PC-3 (cell line): ENCODE measurements at regions of chr7 and their contacts with region 1.

Region 1: DNA sequence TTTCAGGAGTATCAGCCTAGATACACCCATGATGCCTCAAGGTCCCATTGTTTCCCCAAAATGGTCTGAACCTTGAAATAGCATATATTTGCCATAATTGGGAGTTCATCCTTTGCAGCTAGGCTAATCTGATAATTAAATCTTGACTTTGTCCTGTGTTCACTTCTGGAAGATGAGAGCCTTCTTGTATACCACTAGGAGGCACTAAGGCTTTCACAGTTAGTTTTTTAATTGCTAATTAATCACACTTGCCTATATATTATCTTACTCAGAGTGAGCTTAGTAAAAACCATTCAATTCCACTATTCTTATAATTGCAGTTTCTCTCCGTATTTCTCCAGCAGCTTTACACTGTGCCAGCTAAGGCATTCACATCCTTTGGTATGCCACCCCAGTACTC is 48.7 kb upstream of the MAGI2 start:
- DNase-seq: peak; percentile 7
- ATAC-seq: no peak
- H3K4me3 ChIP-seq: no peak overlapping the region
- H3K27ac ChIP-seq: no peak overlapping the region
- H3K4me1 ChIP-seq: no peaks in the 10 kb centered on the region
- H3K27me3 ChIP-seq: no peaks in the 10 kb centered on the region
- CTCF ChIP-seq: peak; percentile 62

Region 2: GRCh38 chr7:79165225-79165624 is 336.9 kb before region 1 on chr7:
- CTCF ChIA-PET with region 1: no interaction called
- POLR2A ChIA-PET with region 1: no interaction called
- intact Hi-C with region 1: no loop called
- DNase-seq: no peak
- ATAC-seq: no peak
- H3K4me3 ChIP-seq: no peak overlapping the region
- H3K27ac ChIP-seq: no peak overlapping the region
- H3K4me1 ChIP-seq: no peaks in the 10 kb centered on the region
- H3K27me3 ChIP-seq: no peaks in the 10 kb centered on the region
- CTCF ChIP-seq: no peak

Region 3: GRCh38 chr7:79553811-79554555 is 51.8 kb after region 1 on chr7:
- CTCF ChIA-PET with region 1: no interaction called
- POLR2A ChIA-PET with region 1: no interaction called
- intact Hi-C with region 1: no loop called
- DNase-seq: peak; percentile 81
- ATAC-seq: peak; percentile 98
- H3K4me3 ChIP-seq: no peak overlapping the region
- H3K27ac ChIP-seq: peak overlapping the region; percentile 86
- H3K4me1 ChIP-seq: peaks cover 14% of the 10 kb centered on the region
- H3K27me3 ChIP-seq: no peaks in the 10 kb centered on the region
- CTCF ChIP-seq: no peak

Region 4: DNA sequence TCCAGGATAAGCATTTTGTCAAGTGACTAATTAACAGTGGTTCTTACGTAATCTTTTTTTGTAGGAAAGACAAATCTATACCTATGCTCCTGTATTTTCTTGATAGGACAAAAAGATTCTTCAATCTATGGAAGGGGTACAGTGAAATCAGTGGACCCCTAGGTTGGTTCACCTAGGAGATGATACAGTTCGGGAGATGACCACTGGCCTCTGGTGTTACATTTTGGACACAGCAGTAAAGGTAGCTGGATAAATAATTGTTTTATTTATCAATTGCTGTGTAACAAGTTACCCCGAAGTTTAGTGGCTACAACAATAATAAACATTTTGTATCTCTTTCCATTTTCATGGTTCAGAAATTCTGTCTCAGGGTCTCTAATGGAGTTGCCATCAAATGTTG is 239.5 kb after region 1 on chr7:
- CTCF ChIA-PET with region 1: no interaction called
- POLR2A ChIA-PET with region 1: no interaction called
- intact Hi-C with region 1: loop called (anchors 2 kb)
- DNase-seq: peak; percentile 42
- ATAC-seq: peak; percentile 74
- H3K4me3 ChIP-seq: no peak overlapping the region
- H3K27ac ChIP-seq: no peak overlapping the region
- H3K4me1 ChIP-seq: no peaks in the 10 kb centered on the region
- H3K27me3 ChIP-seq: no peaks in the 10 kb centered on the region
- CTCF ChIP-seq: peak; percentile 71